CD8-positive, alpha-beta memory T cell (primary cell): ENCODE measurements at regions of chr19 and their contacts with region 1.

Region 1: GRCh38 chr19:892243-893050 is 540 bp downstream of the MED16 start:
- DNase-seq: peak in 3 of 5 donors; percentile 39 to 72 (median 44)
- H3K4me3 ChIP-seq: peak overlapping the region; percentile 74
- H3K4me3 Mint-ChIP-seq: peak overlapping the region; percentile 91 to 96 (median 92)
- H3K27ac ChIP-seq: peak overlapping the region; percentile 86
- H3K27ac Mint-ChIP-seq: peak overlapping the region; percentile 60 to 100 (median 93)
- H3K4me1 ChIP-seq: peaks cover 12% of the 10 kb centered on the region
- H3K4me1 Mint-ChIP-seq: peaks cover 21 to 59% (median 22%) of the 10 kb centered on the region in 3 donors
- H3K27me3 ChIP-seq: no peaks in the 10 kb centered on the region
- H3K27me3 Mint-ChIP-seq: peaks cover 0 to 5% of the 10 kb centered on the region in 2 donors

Region 2: GRCh38 chr19:907183-907853 is 14.9 kb after region 1 on chr19:
- CTCF ChIA-PET with region 1: interaction called, 25 read pairs
- POLR2A ChIA-PET with region 1: interaction called, 77 read pairs
- DNase-seq: peak in 1 of 5 donors; percentile 53
- H3K4me3 ChIP-seq: no peak overlapping the region
- H3K4me3 Mint-ChIP-seq: peak overlapping the region in 6 of 7 donors; percentile 15 to 86 (median 47)
- H3K27ac ChIP-seq: peak overlapping the region; percentile 20
- H3K27ac Mint-ChIP-seq: peak overlapping the region; percentile 24 to 100 (median 97)
- H3K4me1 ChIP-seq: peaks cover 52% of the 10 kb centered on the region
- H3K4me1 Mint-ChIP-seq: peaks cover 34 to 67% (median 42%) of the 10 kb centered on the region in 3 donors
- H3K27me3 ChIP-seq: no peaks in the 10 kb centered on the region
- H3K27me3 Mint-ChIP-seq: no peaks in the 10 kb centered on the region

Region 3: DNA sequence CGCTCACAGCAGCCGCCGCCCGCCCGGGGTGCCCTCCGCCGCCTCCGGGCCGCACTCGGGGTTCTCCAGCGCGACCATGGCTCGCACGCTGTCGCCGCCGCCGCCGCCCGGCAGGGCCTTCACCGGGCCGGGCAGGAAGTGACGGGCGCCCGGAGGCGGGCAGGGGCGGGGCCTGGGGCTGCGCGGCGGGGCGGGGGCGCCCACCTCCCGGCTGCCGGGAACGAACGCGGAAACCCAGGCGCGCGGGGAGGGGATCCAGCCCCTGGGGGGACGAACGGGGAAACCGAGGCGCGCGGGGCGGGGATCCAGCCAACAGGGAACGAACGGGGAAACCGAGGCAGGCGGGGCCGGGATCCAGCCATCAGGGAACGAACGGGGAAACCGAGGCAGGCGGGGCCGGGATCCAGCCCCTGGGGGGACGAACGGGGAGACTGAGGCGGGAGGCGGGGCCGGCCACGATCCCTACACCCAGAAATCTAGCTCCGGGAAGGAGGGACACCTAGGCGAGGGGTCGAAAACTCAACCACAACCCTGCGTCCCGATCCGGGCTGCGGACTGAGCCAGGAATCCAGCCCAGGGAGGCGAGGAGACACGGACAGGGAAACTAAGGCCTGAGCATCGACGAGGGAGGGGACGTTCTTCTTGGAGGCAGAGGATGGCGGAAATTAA is 20.8 kb after region 1 on chr19 and contains the start of gene R3HDM4:
- CTCF ChIA-PET with region 1: interaction called, 25 read pairs
- POLR2A ChIA-PET with region 1: interaction called, 77 read pairs
- DNase-seq: peak; percentile 81 to 90 (median 83)
- H3K4me3 ChIP-seq: peak within 1 kb of the TSS; percentile 82
- H3K4me3 Mint-ChIP-seq: peak within 1 kb of the TSS; percentile 80 to 93 (median 86)
- H3K27ac ChIP-seq: peak within 1 kb of the TSS; percentile 89
- H3K27ac Mint-ChIP-seq: peak within 1 kb of the TSS; percentile 85 to 98 (median 90)
- H3K4me1 ChIP-seq: peaks cover 32% of the 10 kb centered on the region
- H3K4me1 Mint-ChIP-seq: peaks cover 23 to 39% (median 25%) of the 10 kb centered on the region in 3 donors
- H3K27me3 ChIP-seq: peaks cover 4% of the 10 kb centered on the region
- H3K27me3 Mint-ChIP-seq: peaks cover 2 to 9% of the 10 kb centered on the region in 2 donors
- total RNA-seq, gene R3HDM4: 60.7 to 65.2 TPM